H1 (cell line): ENCODE measurements at regions of chr17 and their contacts with region 1.

Region 1: DNA sequence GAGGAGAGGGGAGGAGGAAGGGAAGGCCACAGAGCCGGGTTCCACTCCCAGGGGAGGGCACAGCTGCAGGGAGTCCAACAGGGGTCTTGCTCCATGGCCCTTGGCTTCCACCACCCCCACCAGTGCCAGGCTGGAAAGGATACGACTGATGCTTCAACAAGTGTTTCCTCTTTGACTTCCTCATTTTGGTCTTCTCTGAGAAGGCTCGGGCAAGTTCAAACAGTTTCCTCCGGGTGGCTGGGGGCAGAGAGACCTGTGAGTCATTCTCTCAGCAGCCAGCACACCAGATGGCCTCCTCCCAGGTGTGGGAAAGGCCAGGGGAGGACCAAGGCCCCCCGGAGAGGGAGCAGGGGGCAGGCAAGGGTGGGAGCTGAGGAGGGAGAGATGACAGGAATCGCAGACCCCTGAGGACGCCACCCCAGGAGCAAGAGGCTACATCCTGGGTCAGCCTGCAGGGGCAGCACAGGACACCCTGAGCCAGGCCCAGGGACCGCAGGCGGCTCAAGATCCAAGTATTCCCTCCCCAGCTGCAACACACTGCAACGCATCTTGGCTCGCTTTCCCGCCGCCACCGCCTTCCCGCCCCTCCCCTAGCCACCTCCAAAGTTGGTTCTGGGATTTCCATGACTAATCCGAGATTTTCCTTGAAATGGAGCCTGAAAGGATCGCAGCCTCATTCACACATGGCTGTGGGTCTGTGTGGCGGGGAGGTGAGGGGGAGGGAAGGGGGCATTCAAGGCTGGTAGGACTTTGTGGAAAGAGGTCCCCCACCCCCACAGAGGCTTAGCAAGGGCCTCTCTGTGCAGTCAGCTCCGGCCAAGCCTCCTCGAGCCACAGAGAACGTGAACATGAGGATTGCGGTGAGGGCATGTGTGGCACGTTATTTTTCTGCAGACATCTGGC is 18.4 kb upstream of the MRPS23 start:
- DNase-seq: peak; percentile 58 to 71
- H3K4me3 ChIP-seq: no peak overlapping the region
- H3K27ac ChIP-seq: no peak overlapping the region
- H3K4me1 ChIP-seq: peaks cover 0 to 17% (median 10%) of the 10 kb centered on the region in 4 experiments; a peak in 6 of 7 replicates
- H3K27me3 ChIP-seq: no peaks in the 10 kb centered on the region; a peak in 2 of 7 replicates
- CTCF ChIP-seq: peak; percentile 65 to 79 (median 73)
- EP300 ChIP-seq: no peak
- POLR2A ChIP-seq: no peak
- RAD21 ChIP-seq: peak; percentile 65 to 68

Region 2: DNA sequence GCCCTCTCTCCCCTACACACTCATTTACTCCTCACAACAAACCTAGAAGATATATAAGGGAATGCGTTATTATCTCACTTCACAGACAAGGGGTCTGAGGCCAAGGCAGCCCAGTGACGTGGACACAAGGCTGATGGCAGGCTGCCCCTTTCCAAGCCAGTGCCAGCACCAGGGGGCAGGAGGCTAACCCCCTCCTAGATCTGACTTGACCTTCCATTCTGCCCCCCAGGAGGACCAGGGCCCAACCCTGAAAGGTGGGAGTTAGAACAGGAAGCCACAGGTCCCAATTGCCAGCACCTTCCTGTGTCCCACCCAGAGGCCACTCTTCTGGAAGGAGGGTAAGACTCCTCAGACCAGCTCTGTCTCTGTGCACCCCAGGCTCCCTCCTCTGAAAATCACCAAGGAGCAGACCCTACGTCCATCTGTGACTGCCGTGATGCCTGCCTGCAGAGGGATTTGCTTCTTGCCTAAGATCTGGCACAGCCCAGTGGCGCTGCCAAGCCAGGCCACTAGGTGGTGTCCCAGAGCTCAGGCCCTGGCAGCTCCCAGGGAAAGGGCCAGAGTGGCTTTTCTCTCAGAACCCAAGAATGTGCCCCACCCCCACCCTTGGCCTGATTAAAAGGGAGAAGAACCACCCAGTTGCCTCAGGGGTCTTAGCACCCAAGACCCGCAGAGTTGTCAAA is 24.0 kb after region 1 on chr17:
- CTCF ChIA-PET with region 1: interaction called, 205 read pairs
- POLR2A ChIA-PET with region 1: interaction called, 6 read pairs
- DNase-seq: peak in 1 of 2 experiments; percentile 99
- H3K4me3 ChIP-seq: peak overlapping the region in 1 of 4 experiments; percentile 1; a peak in 1 of 8 replicates
- H3K27ac ChIP-seq: peak overlapping the region; percentile 54; the same call in 1 of the 2 replicates
- H3K4me1 ChIP-seq: peaks cover 8 to 11% (median 11%) of the 10 kb centered on the region in 4 experiments
- H3K27me3 ChIP-seq: no peaks in the 10 kb centered on the region
- CTCF ChIP-seq: peak; percentile 96 to 100 (median 100)
- EP300 ChIP-seq: peak in 1 of 2 experiments; percentile 71; a peak in 1 of 3 replicates
- POLR2A ChIP-seq: no peak
- RAD21 ChIP-seq: peak; percentile 89 to 94

Region 3: GRCh38 chr17:57965521-57966160 is 97.4 kb after region 1 on chr17:
- CTCF ChIA-PET with region 1: interaction called, 19 read pairs
- POLR2A ChIA-PET with region 1: no interaction called
- DNase-seq: peak in 1 of 2 experiments; percentile 52
- H3K4me3 ChIP-seq: no peak overlapping the region
- H3K27ac ChIP-seq: no peak overlapping the region
- H3K4me1 ChIP-seq: peaks cover 0 to 6% (median 0%) of the 10 kb centered on the region in 4 experiments; a peak in 3 of 7 replicates
- H3K27me3 ChIP-seq: no peaks in the 10 kb centered on the region
- CTCF ChIP-seq: no peak
- EP300 ChIP-seq: no peak
- POLR2A ChIP-seq: no peak
- RAD21 ChIP-seq: 0 out of 4 replicates have a peak, but pooled peaks of 1 of the 2 experiments have one; percentile 2

Region 4: GRCh38 chr17:57982452-57983170 is 114.4 kb after region 1 on chr17:
- CTCF ChIA-PET with region 1: interaction called, 10 read pairs
- POLR2A ChIA-PET with region 1: interaction called, 672 read pairs
- DNase-seq: no peak
- H3K4me3 ChIP-seq: no peak overlapping the region
- H3K27ac ChIP-seq: no peak overlapping the region
- H3K4me1 ChIP-seq: peaks cover 0 to 2% (median 0%) of the 10 kb centered on the region in 4 experiments; a peak in 1 of 7 replicates
- H3K27me3 ChIP-seq: no peaks in the 10 kb centered on the region
- CTCF ChIP-seq: no peak
- EP300 ChIP-seq: no peak
- POLR2A ChIP-seq: no peak
- RAD21 ChIP-seq: no peak

Region 5: DNA sequence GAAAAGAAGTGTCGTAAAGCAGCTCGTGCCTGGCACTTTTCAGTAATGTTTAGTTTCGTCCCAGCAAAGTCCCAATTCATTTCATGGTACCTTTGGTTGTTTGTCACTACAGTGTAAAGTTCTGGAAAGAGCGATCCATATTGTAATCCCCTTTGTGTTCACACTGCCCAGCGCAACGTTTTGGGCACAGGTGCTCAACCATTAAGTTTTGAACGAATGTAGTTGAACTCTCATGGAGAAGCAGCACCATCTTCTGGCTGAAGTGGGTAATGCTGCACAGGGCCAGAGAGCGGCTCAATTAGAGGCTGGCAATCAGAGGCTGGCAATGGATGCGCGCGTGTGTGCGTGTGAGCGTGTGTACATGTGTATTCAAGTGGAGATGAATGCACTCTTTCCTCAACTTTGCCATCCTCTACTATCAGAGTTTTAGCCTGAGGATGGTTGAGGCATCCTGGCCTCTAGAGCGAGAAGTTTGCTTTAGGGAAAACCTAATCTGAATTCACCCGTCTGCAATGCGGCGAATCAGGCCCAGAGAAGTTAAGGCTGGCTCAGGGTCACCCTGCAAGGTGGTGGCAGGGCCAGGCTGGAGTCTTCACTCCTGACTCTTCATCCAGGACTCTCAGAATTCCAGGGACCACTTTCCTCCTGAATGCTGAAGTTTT is 244.8 kb after region 1 on chr17:
- CTCF ChIA-PET with region 1: interaction called, 12 read pairs
- POLR2A ChIA-PET with region 1: no interaction called
- DNase-seq: peak in 1 of 2 experiments; percentile 96
- H3K4me3 ChIP-seq: no peak overlapping the region
- H3K27ac ChIP-seq: no peak overlapping the region
- H3K4me1 ChIP-seq: no peaks in the 10 kb centered on the region
- H3K27me3 ChIP-seq: no peaks in the 10 kb centered on the region
- CTCF ChIP-seq: peak; percentile 86 to 99 (median 93)
- EP300 ChIP-seq: no peak
- POLR2A ChIP-seq: no peak
- RAD21 ChIP-seq: peak; percentile 98 to 99